ENCODE measurements at regions of chr1 and their contacts with region 1.

Region 1: GRCh38 chr1:207963427-207964194 is 52.7 kb upstream of the CD34 start:
- DNase-seq: peak; percentile 85
- H3K4me3 Mint-ChIP-seq: peak overlapping the region; percentile 75
- H3K27ac Mint-ChIP-seq: peak overlapping the region; percentile 11
- H3K4me1 Mint-ChIP-seq: peaks cover 14% of the 10 kb centered on the region
- H3K27me3 Mint-ChIP-seq: peaks cover 60% of the 10 kb centered on the region

Region 2: DNA sequence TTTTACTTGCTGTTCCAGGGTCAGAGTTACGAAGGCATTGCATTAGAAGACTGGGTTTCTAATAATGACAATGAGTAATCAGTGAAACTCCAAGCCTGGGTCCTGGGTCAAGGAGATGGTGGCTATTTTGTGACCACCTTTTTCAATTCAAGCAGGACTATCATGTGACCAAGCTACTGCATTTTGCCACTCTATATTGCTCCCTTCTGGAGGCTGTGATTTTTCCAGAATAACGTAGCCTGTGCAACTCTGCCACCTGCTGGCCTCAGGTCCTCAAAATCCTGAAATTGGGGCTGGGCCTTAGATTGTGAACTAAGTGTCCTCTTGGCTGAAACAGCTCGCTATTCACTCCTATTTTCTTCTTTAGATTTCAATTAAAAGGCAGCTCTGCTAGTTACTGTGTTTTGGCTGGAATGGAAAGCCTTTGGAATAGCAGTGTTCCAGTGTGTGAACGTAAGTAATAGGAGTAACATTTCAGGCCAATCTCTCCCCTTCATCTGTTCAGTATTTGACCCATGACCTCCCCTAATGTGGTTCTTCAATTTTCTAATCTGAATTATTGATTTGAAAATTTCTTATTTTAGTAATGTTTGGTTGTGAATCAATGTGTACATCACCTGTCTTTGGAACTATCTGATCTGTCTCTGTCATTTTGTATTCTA is 264.7 kb before region 1 on chr1:
- CTCF ChIA-PET with region 1: interaction called, 11 read pairs
- DNase-seq: peak; percentile 57
- H3K4me3 Mint-ChIP-seq: no peak overlapping the region
- H3K27ac Mint-ChIP-seq: no peak overlapping the region
- H3K4me1 Mint-ChIP-seq: no peaks in the 10 kb centered on the region
- H3K27me3 Mint-ChIP-seq: peaks cover 26% of the 10 kb centered on the region

Region 3: DNA sequence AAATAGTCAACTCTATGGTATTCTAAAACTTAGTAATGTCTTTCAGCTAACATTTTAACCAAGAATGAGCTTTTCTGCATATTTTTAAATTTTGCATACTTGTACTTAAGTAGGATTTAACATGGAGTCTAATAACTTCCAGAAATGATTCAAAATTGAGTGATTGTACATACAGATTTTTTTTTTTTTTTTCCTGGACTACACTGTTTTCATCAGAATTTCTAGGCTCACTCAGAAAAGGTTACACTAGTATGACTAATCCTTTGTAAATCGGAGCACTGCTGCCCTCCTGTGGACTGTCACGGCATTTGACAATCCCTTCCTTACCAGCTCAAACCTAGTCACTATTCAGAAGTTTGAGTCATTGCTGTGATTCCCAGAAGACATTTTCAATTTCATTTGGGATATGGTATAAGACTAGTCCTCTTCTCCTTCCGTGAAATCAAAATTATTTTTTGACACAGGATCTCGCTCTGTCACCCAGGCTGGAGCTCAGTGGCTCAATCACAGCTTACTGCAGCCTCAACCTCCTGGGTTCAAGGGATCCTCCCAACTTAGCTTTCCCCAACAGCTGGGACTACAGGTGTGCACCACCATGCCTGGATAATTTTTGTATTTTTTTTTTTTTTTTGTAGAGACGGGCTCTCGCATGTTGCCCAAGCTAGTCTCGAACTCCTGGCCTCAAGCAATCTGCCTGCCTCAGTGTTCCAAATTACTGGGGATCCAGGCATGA is 166.2 kb before region 1 on chr1:
- CTCF ChIA-PET with region 1: interaction called, 19 read pairs
- DNase-seq: peak; percentile 88
- H3K4me3 Mint-ChIP-seq: no peak overlapping the region
- H3K27ac Mint-ChIP-seq: no peak overlapping the region
- H3K4me1 Mint-ChIP-seq: peaks cover 36% of the 10 kb centered on the region
- H3K27me3 Mint-ChIP-seq: no peaks in the 10 kb centered on the region

Region 4: DNA sequence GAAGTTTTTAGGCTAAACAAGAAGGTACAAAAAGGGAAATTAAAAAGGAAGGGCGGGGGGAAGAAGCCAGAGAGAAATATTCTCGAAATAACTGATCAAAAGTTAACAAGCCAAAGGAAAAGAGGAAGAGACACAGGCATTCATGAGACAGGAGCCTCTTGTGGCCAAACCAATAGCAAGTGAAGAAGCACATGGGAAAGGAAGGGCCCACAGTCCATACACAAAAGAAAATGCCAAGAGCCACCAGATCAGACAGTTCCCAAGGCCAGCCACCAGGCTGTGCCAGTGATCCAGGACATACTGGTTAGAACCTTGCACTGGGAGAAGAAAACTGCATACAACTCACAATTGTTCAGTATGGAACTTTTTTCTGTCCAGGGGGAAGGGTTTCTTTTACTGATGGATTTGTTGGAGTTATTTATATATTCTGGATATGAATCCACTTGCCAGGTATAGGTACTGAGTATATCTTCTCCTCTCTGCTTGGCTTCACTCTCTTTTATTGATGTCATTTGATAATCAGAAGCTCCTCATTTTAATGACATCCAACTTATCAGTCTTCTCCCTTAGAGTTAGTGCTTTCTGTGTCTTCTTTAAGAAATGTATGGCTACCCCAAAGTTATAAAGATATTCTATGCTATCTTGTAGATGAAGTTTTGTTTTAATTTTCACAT is 135.0 kb before region 1 on chr1:
- CTCF ChIA-PET with region 1: interaction called, 54 read pairs
- DNase-seq: peak; percentile 73
- H3K4me3 Mint-ChIP-seq: no peak overlapping the region
- H3K27ac Mint-ChIP-seq: peak overlapping the region; percentile 79
- H3K4me1 Mint-ChIP-seq: peaks cover 96% of the 10 kb centered on the region
- H3K27me3 Mint-ChIP-seq: peaks cover 6% of the 10 kb centered on the region

Region 5: DNA sequence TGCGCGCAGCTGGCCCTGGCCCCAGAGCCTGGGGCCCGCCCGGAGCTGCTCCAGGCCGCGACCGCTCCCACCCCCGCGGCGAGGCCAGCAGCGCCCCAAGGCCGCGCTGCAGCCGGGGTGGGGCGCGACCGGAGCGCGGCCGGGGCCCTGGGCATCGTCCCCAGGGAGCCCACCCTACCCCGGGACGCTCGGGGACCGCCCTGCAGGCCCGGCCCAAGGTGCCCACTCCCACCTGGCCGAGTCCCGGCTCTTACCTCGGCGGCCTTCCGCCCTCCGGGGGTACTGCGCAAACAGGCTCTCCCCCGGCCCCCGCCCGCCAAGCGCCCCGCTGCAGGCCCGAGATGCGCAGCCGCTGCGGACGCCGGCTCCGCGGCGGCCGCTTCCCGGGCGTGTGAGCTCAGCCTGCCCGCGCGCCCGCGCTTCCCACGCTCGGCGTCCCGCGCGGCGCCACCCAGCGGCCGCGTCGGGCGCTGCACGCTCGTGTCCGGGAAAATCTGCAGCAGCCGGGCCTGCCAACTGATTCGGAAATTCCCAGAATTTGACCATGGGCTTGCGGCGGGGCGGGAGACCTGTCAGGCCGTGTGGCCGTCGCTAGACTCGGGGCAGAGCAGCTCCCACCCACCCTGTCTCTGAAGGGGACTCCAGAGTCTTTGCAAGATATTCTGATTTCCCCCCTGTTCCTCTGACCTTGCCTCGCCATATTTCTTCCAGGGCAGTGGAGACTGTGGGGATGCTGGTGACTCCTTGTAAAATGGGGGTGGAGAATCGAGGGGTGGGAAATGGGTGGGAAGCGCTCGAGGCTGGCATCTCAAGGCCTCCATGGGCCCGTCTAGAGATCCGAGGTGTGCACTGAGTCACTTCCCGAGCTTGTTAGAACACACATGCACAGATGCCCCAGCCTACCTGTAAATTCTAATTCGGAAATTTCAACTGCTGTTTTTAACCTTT is 94.6 kb before region 1 on chr1:
- CTCF ChIA-PET with region 1: interaction called, 14 read pairs
- DNase-seq: peak; percentile 68
- H3K4me3 Mint-ChIP-seq: peak overlapping the region; percentile 95
- H3K27ac Mint-ChIP-seq: peak overlapping the region; percentile 97
- H3K4me1 Mint-ChIP-seq: peaks cover 83% of the 10 kb centered on the region
- H3K27me3 Mint-ChIP-seq: no peaks in the 10 kb centered on the region

Region 6: GRCh38 chr1:207876131-207876530 is 87.5 kb before region 1 on chr1:
- CTCF ChIA-PET with region 1: interaction called, 12 read pairs
- DNase-seq: no peak
- H3K4me3 Mint-ChIP-seq: no peak overlapping the region
- H3K27ac Mint-ChIP-seq: no peak overlapping the region
- H3K4me1 Mint-ChIP-seq: peaks cover 56% of the 10 kb centered on the region
- H3K27me3 Mint-ChIP-seq: peaks cover 6% of the 10 kb centered on the region

Region 7: GRCh38 chr1:207897188-207897587 is 66.4 kb before region 1 on chr1:
- CTCF ChIA-PET with region 1: interaction called, 45 read pairs
- DNase-seq: no peak
- H3K4me3 Mint-ChIP-seq: no peak overlapping the region
- H3K27ac Mint-ChIP-seq: no peak overlapping the region
- H3K4me1 Mint-ChIP-seq: peaks cover 13% of the 10 kb centered on the region
- H3K27me3 Mint-ChIP-seq: peaks cover 13% of the 10 kb centered on the region

Region 8: GRCh38 chr1:208149776-208150514 is 186.3 kb after region 1 on chr1:
- CTCF ChIA-PET with region 1: no interaction called
- DNase-seq: no peak
- H3K4me3 Mint-ChIP-seq: no peak overlapping the region
- H3K27ac Mint-ChIP-seq: no peak overlapping the region
- H3K4me1 Mint-ChIP-seq: no peaks in the 10 kb centered on the region
- H3K27me3 Mint-ChIP-seq: peaks cover 19% of the 10 kb centered on the region